ENCODE measurements at regions of chr3 and their contacts with region 1.

Region 1: GRCh38 chr3:35908366-35909232 is 269.3 kb downstream of the ARPP21 start:
- DNase-seq: peak; percentile 60
- ATAC-seq: no peak
- H3K4me3 ChIP-seq: no peak overlapping the region
- H3K4me3 Mint-ChIP-seq: no peak overlapping the region
- H3K27ac ChIP-seq: no peak overlapping the region
- H3K27ac Mint-ChIP-seq: no peak overlapping the region
- H3K4me1 ChIP-seq: no peaks in the 10 kb centered on the region
- H3K4me1 Mint-ChIP-seq: no peaks in the 10 kb centered on the region
- H3K27me3 ChIP-seq: no peaks in the 10 kb centered on the region
- H3K27me3 Mint-ChIP-seq: no peaks in the 10 kb centered on the region
- CTCF ChIP-seq: peak; percentile 86

Region 2: DNA sequence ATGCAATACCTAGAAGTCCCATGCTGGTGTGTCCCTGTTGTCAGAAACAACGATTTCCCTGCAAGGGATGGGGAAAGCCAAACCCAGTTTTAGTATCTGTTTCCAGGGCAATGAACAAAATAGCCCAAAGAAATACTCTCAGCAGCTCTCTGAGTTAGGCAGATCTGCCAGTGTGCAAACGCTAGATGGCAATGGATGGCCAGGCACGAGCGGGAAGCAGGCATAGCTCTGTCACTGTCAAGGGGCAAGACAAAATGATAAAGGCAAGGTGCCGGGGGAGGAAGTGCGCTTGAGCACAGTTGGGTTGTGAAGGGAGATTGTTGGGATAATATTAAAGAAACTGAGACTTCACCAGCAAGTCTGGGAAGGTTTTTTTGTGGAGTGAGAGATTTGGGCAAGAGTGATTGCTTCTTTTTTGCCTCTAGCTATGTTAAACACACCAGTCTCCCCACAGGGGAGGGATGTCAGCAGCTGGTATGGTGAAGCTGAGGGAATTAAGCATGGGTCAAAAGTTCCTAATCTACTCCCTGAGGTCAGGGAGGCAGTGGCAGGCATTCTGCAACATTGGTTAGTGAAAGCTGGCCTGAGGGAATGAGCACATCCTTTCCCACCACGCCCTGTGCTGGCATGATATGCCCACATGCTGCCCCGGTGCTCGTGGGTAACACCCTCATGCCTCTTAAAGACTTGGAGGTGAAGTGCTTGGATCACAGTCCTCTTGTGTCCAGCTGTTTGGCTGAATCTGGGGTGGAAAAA is 1992.6 kb before region 1 on chr3:
- CTCF ChIA-PET with region 1: interaction called, 10 read pairs
- POLR2A ChIA-PET with region 1: no interaction called
- intact Hi-C with region 1: no loop called
- DNase-seq: no peak
- ATAC-seq: no peak
- H3K4me3 ChIP-seq: no peak overlapping the region
- H3K4me3 Mint-ChIP-seq: no peak overlapping the region
- H3K27ac ChIP-seq: no peak overlapping the region
- H3K27ac Mint-ChIP-seq: no peak overlapping the region
- H3K4me1 ChIP-seq: no peaks in the 10 kb centered on the region
- H3K4me1 Mint-ChIP-seq: peaks cover 3% of the 10 kb centered on the region
- H3K27me3 ChIP-seq: no peaks in the 10 kb centered on the region
- H3K27me3 Mint-ChIP-seq: peaks cover 9% of the 10 kb centered on the region
- CTCF ChIP-seq: no peak

Region 3: DNA sequence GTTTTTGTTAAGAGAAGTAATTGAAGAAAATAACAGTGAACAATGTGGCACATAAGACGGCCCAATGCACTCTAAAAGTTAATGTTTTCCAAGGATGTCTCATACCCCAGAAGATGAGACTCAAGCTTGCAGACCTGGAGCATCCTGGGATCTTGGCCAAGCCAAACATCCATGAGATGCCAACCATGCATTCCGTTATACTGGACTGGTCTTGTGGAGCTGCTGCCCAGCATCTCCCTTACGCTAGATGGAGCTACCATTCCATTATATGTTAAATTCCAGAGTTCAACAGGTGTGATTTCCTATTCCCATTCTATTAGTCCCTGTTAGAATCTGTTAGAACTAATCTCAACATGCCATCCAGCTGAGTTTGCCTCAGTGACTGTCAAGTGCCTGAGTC is 1928.3 kb before region 1 on chr3:
- CTCF ChIA-PET with region 1: interaction called, 12 read pairs
- POLR2A ChIA-PET with region 1: no interaction called
- intact Hi-C with region 1: no loop called
- DNase-seq: peak; percentile 6
- ATAC-seq: no peak
- H3K4me3 ChIP-seq: no peak overlapping the region
- H3K4me3 Mint-ChIP-seq: no peak overlapping the region
- H3K27ac ChIP-seq: no peak overlapping the region
- H3K27ac Mint-ChIP-seq: no peak overlapping the region
- H3K4me1 ChIP-seq: no peaks in the 10 kb centered on the region
- H3K4me1 Mint-ChIP-seq: peaks cover under 1% of the 10 kb centered on the region
- H3K27me3 ChIP-seq: no peaks in the 10 kb centered on the region
- H3K27me3 Mint-ChIP-seq: no peaks in the 10 kb centered on the region
- CTCF ChIP-seq: no peak

Region 4: DNA sequence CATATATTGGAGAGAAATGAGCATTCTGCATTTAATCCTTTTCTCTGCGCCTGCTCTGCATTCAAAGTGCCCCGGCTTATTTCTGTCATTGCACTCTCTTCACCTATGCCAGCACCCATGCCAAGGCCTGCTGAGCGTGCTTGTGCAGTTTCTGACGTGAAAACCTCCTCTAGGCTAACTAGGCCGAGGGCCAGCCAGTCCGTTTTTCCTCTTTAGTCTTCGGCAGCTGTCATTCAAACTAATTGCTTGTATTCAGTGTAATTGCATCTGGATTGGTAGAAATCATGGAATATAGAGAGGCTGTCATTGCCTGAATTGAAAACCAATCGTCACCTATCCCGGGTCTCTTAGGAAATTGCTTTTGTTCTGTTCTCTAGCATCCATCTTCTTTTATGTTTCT is 175.3 kb before region 1 on chr3:
- CTCF ChIA-PET with region 1: no interaction called
- POLR2A ChIA-PET with region 1: no interaction called
- intact Hi-C with region 1: no loop called
- DNase-seq: no peak
- ATAC-seq: no peak
- H3K4me3 ChIP-seq: no peak overlapping the region
- H3K4me3 Mint-ChIP-seq: no peak overlapping the region
- H3K27ac ChIP-seq: no peak overlapping the region
- H3K27ac Mint-ChIP-seq: no peak overlapping the region
- H3K4me1 ChIP-seq: no peaks in the 10 kb centered on the region
- H3K4me1 Mint-ChIP-seq: peaks cover 5% of the 10 kb centered on the region
- H3K27me3 ChIP-seq: no peaks in the 10 kb centered on the region
- H3K27me3 Mint-ChIP-seq: no peaks in the 10 kb centered on the region
- CTCF ChIP-seq: no peak

Region 5: GRCh38 chr3:35857004-35857403 is 51.6 kb before region 1 on chr3:
- CTCF ChIA-PET with region 1: no interaction called
- POLR2A ChIA-PET with region 1: no interaction called
- intact Hi-C with region 1: no loop called
- DNase-seq: peak; percentile 27
- ATAC-seq: peak; percentile 39
- H3K4me3 ChIP-seq: no peak overlapping the region
- H3K4me3 Mint-ChIP-seq: no peak overlapping the region
- H3K27ac ChIP-seq: no peak overlapping the region
- H3K27ac Mint-ChIP-seq: no peak overlapping the region
- H3K4me1 ChIP-seq: peaks cover 0 to 7% of the 10 kb centered on the region in 2 donors
- H3K4me1 Mint-ChIP-seq: peaks cover 8% of the 10 kb centered on the region
- H3K27me3 ChIP-seq: no peaks in the 10 kb centered on the region
- H3K27me3 Mint-ChIP-seq: no peaks in the 10 kb centered on the region
- CTCF ChIP-seq: no peak

Region 6: DNA sequence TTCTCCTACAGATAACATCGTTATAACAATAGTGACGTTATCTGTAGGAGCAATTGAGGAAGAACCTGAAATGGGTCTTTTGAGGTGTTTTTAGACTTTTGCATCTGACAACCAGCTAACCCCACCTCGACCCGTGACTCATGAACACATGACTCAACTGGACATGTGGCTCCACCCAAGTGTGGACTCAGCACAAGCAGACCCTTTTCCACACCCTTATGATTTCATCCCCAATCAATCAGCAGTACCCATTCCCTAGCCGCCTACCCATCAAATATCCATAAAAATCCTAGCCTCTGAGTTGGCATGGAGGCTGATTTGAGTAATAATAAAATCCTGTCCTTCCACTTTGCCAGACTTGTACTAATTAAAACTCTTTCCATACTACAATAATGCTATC is 13.9 kb before region 1 on chr3:
- CTCF ChIA-PET with region 1: interaction called, 13 read pairs
- POLR2A ChIA-PET with region 1: no interaction called
- intact Hi-C with region 1: no loop called
- DNase-seq: no peak
- ATAC-seq: no peak
- H3K4me3 ChIP-seq: no peak overlapping the region
- H3K4me3 Mint-ChIP-seq: no peak overlapping the region
- H3K27ac ChIP-seq: no peak overlapping the region
- H3K27ac Mint-ChIP-seq: no peak overlapping the region
- H3K4me1 ChIP-seq: no peaks in the 10 kb centered on the region
- H3K4me1 Mint-ChIP-seq: no peaks in the 10 kb centered on the region
- H3K27me3 ChIP-seq: no peaks in the 10 kb centered on the region
- H3K27me3 Mint-ChIP-seq: no peaks in the 10 kb centered on the region
- CTCF ChIP-seq: no peak